ENCODE measurements at regions of chr10 and their contacts with region 1.

Region 1: DNA sequence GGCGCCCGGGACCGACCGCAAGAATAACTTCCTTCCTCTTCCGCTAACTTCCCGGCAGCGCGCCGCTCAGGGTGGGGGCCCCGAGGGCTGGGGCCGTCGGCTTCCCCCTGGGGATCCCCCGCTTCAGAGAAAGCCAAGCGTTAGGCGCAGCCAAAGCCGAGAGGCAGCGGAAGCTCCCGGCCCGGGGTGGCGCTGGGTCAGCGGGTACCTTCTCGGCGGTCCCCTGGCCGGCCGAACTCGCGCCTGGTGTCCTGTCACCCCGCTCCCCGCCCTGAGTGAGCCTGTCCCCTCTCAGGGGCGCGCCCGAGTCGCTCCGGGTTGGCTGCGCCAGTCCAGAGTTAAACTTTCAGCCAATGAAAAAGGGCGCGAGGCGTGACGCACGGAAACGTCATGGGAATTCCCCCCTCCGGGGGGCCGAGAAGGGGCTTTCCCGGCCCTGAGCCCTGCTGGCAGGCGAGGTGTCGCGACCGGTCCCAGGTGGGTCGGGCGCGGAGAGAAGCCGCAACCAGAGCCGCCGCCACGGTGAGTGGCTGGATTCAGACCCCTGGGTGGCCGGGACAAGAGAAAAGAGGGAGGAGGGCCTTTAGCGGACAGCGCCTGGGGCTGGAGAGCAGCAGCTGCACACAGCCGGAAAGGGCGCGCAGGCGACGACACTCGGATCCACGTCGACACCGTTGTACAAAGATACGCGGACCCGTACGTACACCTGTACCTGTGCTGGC is 1.3 kb upstream of the NFKB2 start:
- DNase-seq: peak; percentile 99
- H3K4me3 Mint-ChIP-seq: peak overlapping the region; percentile 90
- H3K27ac Mint-ChIP-seq: peak overlapping the region; percentile 97
- H3K4me1 Mint-ChIP-seq: peaks cover 47% of the 10 kb centered on the region
- H3K27me3 Mint-ChIP-seq: no peaks in the 10 kb centered on the region

Region 2: DNA sequence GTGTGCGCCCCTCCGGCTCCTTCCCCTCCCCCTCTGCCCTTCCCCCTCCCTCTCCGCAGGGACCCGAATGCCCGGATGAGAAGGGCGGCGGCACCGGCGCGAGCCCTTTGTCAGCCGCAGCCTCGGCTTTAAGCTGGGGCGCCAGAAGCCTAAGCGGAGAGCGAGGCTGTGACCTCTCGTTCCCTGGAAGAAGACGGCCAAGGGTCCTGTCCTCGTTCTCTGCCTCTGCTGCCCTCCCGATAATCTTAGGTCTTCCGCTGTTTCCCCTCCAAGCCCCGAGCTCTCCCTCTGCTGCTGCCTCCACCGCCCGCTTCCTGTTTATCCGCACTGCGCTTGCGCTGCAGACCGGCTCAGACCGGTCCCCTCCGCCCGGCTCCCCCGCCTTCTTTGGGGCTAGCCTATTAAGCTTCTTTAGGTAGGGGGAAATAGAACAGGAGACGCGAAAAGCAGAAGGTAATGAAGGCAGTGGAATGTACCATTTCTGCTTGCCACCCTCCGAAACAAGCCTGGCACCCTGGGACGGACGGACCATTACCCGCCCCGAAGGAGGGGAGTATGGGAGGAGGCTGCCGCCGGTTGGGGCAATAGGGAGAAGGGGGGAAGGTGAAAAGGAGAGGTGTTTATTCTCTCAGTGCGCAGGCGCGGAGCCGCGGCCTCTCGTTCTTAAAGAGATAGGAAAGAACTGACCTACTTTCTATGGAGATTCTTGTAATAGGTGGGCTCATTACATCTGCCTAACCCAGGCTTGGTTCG is 575.9 kb before region 1 on chr10 and contains the start of gene OGA:
- intact Hi-C with region 1: loop called (anchors 10 kb)
- DNase-seq: peak; percentile 97
- H3K4me3 Mint-ChIP-seq: peak within 1 kb of the TSS; percentile 100
- H3K27ac Mint-ChIP-seq: peak within 1 kb of the TSS; percentile 100
- H3K4me1 Mint-ChIP-seq: peaks cover 57% of the 10 kb centered on the region
- H3K27me3 Mint-ChIP-seq: peaks cover 3% of the 10 kb centered on the region
- total RNA-seq, gene OGA: 113 and 117 TPM in 2 replicates

Region 3: GRCh38 chr10:102064868-102065560 is 329.2 kb before region 1 on chr10 and contains the start of gene HPS6:
- intact Hi-C with region 1: no loop called
- DNase-seq: peak; percentile 89
- H3K4me3 Mint-ChIP-seq: peak within 1 kb of the TSS; percentile 89
- H3K27ac Mint-ChIP-seq: peak within 1 kb of the TSS; percentile 90
- H3K4me1 Mint-ChIP-seq: peaks cover 17% of the 10 kb centered on the region
- H3K27me3 Mint-ChIP-seq: no peaks in the 10 kb centered on the region
- total RNA-seq, gene HPS6: 24.5 and 26.8 TPM in 2 replicates

Region 4: GRCh38 chr10:102167861-102168260 is 226.4 kb before region 1 on chr10:
- intact Hi-C with region 1: loop called (anchors 1 kb)
- DNase-seq: no peak
- H3K4me3 Mint-ChIP-seq: no peak overlapping the region
- H3K27ac Mint-ChIP-seq: no peak overlapping the region
- H3K4me1 Mint-ChIP-seq: peaks cover 10% of the 10 kb centered on the region
- H3K27me3 Mint-ChIP-seq: no peaks in the 10 kb centered on the region

Region 5: DNA sequence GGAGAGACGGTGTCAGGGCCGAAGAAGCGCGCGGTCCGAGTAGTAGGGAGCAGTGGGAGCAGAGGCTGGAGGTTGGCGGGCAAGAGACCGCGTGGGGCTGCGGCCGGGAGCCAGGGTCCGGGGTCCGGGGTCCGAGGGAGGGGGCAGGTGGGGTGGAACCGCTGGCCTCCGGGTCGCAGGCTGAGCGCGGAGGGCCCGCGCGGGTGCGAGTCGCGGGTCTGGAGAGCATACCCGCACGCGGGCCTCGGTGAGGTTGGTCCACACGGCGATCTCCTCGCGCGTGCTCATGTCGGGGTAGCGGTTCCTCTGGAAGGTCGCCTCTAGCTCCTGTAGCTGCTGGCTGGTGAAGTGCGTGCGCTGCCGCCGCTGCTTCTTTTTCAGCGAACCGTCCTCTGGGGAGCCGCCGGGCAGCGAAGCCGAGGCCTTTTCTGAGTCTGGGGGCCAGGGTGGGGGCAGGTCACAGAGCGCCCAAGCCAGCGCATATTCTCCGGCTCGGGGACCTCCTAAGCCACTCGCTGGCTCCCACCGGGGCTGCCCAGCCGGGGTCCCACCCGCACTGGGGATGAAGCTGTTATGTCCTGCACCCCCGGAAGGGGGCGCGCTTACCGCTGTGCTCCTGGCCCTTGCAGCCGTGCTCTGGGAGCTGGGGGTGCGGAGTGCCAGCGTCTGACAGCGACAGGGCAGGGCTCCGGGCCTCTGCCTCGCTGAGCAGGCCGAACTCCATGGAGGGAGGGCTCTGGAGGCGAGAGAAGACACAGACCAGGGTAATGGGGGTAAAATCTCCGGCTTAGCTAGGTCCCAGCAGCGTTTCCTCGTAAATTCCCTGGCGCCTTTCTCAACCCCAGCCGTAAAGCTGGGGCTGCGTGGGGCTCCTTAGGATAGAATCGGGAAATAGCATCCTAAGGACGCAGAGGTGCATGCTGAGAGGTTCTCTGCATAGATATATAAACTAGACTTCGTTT is 162.6 kb before region 1 on chr10:
- intact Hi-C with region 1: loop called (anchors 1 kb)
- DNase-seq: peak; percentile 65
- H3K4me3 Mint-ChIP-seq: peak overlapping the region; percentile 68
- H3K27ac Mint-ChIP-seq: no peak overlapping the region
- H3K4me1 Mint-ChIP-seq: peaks cover 10% of the 10 kb centered on the region
- H3K27me3 Mint-ChIP-seq: peaks cover 58% of the 10 kb centered on the region

Region 6: GRCh38 chr10:102420810-102421644 is 26.8 kb after region 1 on chr10 and contains the start of gene FBXL15:
- intact Hi-C with region 1: loop called (anchors 1 kb)
- DNase-seq: peak; percentile 96
- H3K4me3 Mint-ChIP-seq: peak within 1 kb of the TSS; percentile 99
- H3K27ac Mint-ChIP-seq: peak within 1 kb of the TSS; percentile 98
- H3K4me1 Mint-ChIP-seq: peaks cover 34% of the 10 kb centered on the region
- H3K27me3 Mint-ChIP-seq: peaks cover 9% of the 10 kb centered on the region
- total RNA-seq, gene FBXL15: 14.5 and 18.5 TPM in 2 replicates

Region 7: DNA sequence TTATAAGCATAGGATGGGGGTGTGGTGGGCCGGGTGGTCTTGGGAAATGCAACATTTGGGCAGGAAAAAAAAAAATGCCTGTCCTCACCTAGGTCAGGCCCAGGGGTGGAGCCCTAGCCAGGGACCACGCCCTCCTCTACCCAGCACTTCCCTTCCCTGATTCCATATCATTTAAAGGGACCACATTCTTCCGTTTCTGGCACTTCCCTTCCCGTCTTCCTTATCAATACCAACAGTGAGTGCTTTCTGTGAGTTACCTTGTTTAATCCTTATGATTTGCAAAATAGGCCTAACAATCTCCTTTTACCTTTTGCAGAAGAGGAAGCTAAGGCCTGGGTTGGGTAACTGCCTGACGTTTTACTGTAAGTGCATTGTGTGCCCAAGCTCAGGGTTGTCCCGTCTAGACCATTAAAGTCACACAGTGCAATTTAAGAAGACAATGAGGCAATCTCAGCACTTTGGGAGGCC is 73.8 kb after region 1 on chr10:
- intact Hi-C with region 1: no loop called
- DNase-seq: no peak
- H3K4me3 Mint-ChIP-seq: no peak overlapping the region
- H3K27ac Mint-ChIP-seq: no peak overlapping the region
- H3K4me1 Mint-ChIP-seq: peaks cover 6% of the 10 kb centered on the region
- H3K27me3 Mint-ChIP-seq: no peaks in the 10 kb centered on the region

Region 8: DNA sequence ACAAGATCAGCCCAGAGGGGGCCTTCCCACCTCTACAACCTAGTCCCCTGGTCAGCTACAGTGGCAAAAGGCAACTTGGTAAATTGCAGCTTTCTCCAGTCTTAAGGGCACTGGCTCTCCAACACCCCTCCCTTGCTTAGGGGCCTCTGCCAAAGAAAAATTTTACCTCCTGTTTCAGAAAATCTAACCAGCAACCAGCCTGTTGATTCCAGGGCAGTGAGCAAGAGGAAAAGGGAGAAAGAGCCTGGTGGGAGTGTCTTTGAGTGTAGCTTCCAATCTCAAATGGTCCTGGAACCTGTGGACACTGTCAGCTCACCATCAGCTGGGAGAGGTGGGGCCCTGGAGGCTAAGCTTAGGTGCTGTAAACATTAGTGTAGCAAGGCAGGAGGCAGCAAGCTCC is 85.4 kb after region 1 on chr10:
- intact Hi-C with region 1: loop called (anchors 1 kb)
- DNase-seq: no peak
- H3K4me3 Mint-ChIP-seq: no peak overlapping the region
- H3K27ac Mint-ChIP-seq: no peak overlapping the region
- H3K4me1 Mint-ChIP-seq: peaks cover 7% of the 10 kb centered on the region
- H3K27me3 Mint-ChIP-seq: no peaks in the 10 kb centered on the region

Region 9: DNA sequence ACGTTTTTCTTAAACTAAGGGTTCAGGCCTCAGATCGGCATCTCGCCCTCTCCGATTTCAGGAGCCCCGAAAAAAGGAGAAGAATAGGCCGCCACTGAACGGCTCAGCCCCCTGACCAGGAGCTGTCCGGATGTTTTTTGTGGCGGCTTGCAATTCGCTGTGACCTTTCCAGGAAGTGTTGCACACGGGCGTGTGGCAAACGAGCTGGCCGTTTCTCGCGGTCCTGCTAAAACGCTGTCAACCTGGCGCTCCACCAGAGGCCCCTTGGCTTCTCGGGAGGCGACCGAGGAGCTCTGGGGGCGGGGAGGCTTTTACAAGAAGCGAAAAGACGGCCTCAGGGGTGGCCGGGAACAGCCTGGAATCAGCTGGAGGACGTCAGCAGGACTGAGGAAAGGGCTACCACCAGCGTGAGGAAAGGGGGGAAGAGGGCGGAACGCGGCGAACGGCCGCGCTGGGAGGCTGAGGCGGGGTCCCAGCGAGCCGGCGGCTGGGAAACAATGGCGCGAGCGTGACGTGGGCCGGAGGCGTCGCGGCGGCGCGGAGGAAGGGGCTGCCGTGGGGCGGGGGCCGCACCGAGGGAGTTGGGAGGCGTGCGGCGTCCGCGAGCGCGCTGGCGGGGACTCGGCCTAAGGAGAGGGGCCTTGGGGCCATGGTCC is 798.3 kb after region 1 on chr10:
- intact Hi-C with region 1: loop called (anchors 10 kb)
- DNase-seq: peak; percentile 64
- H3K4me3 Mint-ChIP-seq: peak overlapping the region; percentile 96
- H3K27ac Mint-ChIP-seq: peak overlapping the region; percentile 99
- H3K4me1 Mint-ChIP-seq: peaks cover 45% of the 10 kb centered on the region
- H3K27me3 Mint-ChIP-seq: no peaks in the 10 kb centered on the region

Measured in activated T-helper 1 cell treated with anti-CD3 and anti-CD28 coated beads, Interleukin-12 subunit alpha, Interleukin-12 subunit beta, Interleukin-2, Interleukin-4 antibody, amounts not matched to agents 30 ng/mL and 10 ng/mL and 1 ng/mL, durations not matched to agents 14 hours and 24 hours and 36 hours (primary cell).